ENCODE measurements at regions of chr1 and their contacts with region 1.

Region 1: GRCh38 chr1:28045777-28046176 is 42.6 kb downstream of the EYA3 start:
- DNase-seq: no peak
- ATAC-seq: no peak
- H3K4me3 ChIP-seq: no peak overlapping the region
- H3K27ac ChIP-seq: no peak overlapping the region
- H3K4me1 ChIP-seq: peaks cover 3% of the 10 kb centered on the region; the same call in 1 of the 2 replicates
- H3K27me3 ChIP-seq: no peaks in the 10 kb centered on the region
- CTCF ChIP-seq: no peak
- POLR2A ChIP-seq: no peak
- RAD21 ChIP-seq: no peak

Region 2: GRCh38 chr1:27906759-27907158 is 139.0 kb before region 1 on chr1:
- CTCF ChIA-PET with region 1: no interaction called
- POLR2A ChIA-PET with region 1: no interaction called
- dilution Hi-C with region 1: no loop called
- in situ Hi-C with region 1: no loop called
- intact Hi-C with region 1: no loop called
- DNase-seq: no peak
- ATAC-seq: no peak
- H3K4me3 ChIP-seq: no peak overlapping the region
- H3K27ac ChIP-seq: no peak overlapping the region
- H3K4me1 ChIP-seq: no peaks in the 10 kb centered on the region
- H3K27me3 ChIP-seq: no peaks in the 10 kb centered on the region
- CTCF ChIP-seq: no peak
- POLR2A ChIP-seq: no peak
- RAD21 ChIP-seq: no peak

Region 3: GRCh38 chr1:28010969-28011368 is 34.8 kb before region 1 on chr1:
- CTCF ChIA-PET with region 1: no interaction called
- POLR2A ChIA-PET with region 1: no interaction called
- dilution Hi-C with region 1: no loop called
- in situ Hi-C with region 1: no loop called
- intact Hi-C with region 1: no loop called
- DNase-seq: peak; percentile 58
- ATAC-seq: peak; percentile 82
- H3K4me3 ChIP-seq: no peak overlapping the region
- H3K27ac ChIP-seq: no peak overlapping the region
- H3K4me1 ChIP-seq: no peaks in the 10 kb centered on the region
- H3K27me3 ChIP-seq: no peaks in the 10 kb centered on the region
- CTCF ChIP-seq: no peak
- POLR2A ChIP-seq: no peak
- RAD21 ChIP-seq: no peak

Region 4: GRCh38 chr1:28058971-28059878 is 13.4 kb after region 1 on chr1:
- CTCF ChIA-PET with region 1: interaction called, 4 read pairs
- POLR2A ChIA-PET with region 1: no interaction called
- dilution Hi-C with region 1: no loop called
- in situ Hi-C with region 1: no loop called
- intact Hi-C with region 1: loop called (anchors 1 kb)
- DNase-seq: no peak
- ATAC-seq: no peak
- H3K4me3 ChIP-seq: no peak overlapping the region
- H3K27ac ChIP-seq: no peak overlapping the region
- H3K4me1 ChIP-seq: no peaks in the 10 kb centered on the region
- H3K27me3 ChIP-seq: no peaks in the 10 kb centered on the region
- CTCF ChIP-seq: no peak
- POLR2A ChIP-seq: no peak
- RAD21 ChIP-seq: no peak

Region 5: DNA sequence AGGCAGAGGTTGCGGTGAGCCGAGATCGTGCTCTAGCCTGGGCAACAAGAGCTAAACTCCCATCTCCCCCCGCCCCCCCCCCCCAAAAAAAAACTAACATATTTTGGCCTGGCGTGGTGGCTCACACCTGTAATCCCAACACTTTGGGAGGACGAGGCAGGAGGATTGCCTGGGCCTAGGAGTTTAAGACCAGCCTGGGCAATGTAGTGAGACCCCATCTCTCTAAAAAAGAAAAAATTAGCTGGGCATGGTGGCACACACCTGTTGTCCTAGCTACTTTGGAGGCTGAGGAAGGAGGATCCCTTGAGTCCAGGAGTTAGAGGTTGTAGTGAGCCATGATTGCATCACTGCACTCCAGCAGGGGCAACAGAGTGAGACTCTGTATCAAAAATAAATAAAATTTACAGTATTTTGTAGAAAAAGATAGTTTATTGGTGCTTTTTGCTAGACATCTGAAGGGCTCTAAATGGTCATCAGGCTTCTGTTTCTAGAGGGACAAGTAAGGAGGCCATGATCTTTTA is 699.9 kb after region 1 on chr1:
- CTCF ChIA-PET with region 1: no interaction called
- POLR2A ChIA-PET with region 1: interaction called, 16 read pairs
- dilution Hi-C with region 1: no loop called
- in situ Hi-C with region 1: no loop called
- intact Hi-C with region 1: no loop called
- DNase-seq: no peak
- ATAC-seq: no peak
- H3K4me3 ChIP-seq: no peak overlapping the region
- H3K27ac ChIP-seq: no peak overlapping the region
- H3K4me1 ChIP-seq: peaks cover under 1% of the 10 kb centered on the region
- H3K27me3 ChIP-seq: no peaks in the 10 kb centered on the region
- CTCF ChIP-seq: no peak
- POLR2A ChIP-seq: no peak
- RAD21 ChIP-seq: no peak

Measured in IMR-90 (cell line).